PC-3 (cell line): ENCODE measurements at regions of chr11 and their contacts with region 1.

Region 1: GRCh38 chr11:75878933-75879332 is 63.9 kb downstream of the UVRAG start:
- DNase-seq: no peak
- ATAC-seq: no peak
- H3K4me3 ChIP-seq: no peak overlapping the region
- H3K27ac ChIP-seq: no peak overlapping the region
- H3K4me1 ChIP-seq: no peaks in the 10 kb centered on the region
- H3K27me3 ChIP-seq: no peaks in the 10 kb centered on the region
- CTCF ChIP-seq: no peak

Region 2: DNA sequence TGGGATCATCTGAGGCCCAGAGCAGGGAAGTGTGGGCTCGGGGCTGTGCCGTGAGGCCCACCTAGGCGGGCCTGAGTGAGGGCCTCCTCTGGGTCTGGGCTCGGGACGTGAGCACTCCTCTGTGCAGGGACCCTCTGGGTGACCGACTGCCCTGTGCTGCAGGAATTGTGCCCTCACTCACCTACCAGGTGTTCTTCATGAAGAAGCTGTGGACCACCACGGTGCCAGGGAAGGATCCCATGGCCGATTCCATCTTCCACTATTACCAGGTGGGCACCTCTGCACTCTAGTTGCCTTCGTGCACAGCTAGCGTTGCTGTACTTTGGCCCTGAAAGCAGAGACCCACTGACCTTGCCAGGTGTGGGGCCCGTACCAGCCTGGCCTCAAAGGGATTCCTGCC is 1329.6 kb after region 1 on chr11:
- CTCF ChIA-PET with region 1: no interaction called
- POLR2A ChIA-PET with region 1: interaction called, 14 read pairs
- intact Hi-C with region 1: no loop called
- DNase-seq: no peak
- ATAC-seq: no peak
- H3K4me3 ChIP-seq: no peak overlapping the region
- H3K27ac ChIP-seq: no peak overlapping the region
- H3K4me1 ChIP-seq: no peaks in the 10 kb centered on the region
- H3K27me3 ChIP-seq: no peaks in the 10 kb centered on the region
- CTCF ChIP-seq: no peak